Ascending aorta (tissue), 2 donors: ENCODE measurements at regions of chr11 and their contacts with region 1.

Region 1: DNA sequence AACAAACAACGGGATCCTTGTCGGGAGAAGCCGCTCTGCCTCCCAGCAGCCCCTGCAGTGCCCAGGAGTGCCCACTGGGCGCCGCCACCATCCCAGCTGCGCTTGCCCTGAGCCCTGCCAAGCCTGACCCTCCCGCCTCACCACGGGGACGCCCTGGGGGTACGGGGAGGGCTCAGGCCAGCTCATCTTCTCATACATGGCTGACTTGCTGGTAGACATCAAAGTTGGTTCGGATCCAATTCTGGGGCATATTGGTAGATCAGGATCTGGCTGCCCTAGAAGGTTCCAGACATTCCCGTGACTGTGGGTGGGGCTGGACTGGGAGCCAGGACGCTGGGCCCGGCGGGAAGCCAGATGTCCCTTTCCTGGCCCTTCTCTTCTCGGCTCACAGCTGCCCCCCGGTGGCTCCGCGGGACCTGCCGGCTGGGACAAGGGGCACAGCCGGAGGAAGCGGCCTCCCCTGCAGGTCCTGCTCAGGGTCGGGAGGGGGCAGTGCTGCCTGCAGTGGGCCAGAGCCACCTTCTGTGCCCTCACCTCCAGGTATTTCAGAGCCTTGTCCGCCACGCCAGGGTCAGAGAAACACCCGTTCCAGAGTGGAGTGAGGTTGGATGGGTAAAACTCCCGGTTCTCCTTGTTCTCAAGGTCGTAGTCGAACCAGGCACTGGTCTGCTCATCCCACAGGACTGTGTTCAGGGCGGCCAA is 10.6 kb upstream of the TREH start:
- DNase-seq: peak; percentile 76 to 90
- H3K4me3 ChIP-seq: peak overlapping the region; percentile 44 to 50
- H3K27ac ChIP-seq: peak overlapping the region; percentile 67 to 72
- H3K4me1 ChIP-seq: peaks cover 3 to 7% of the 10 kb centered on the region in 2 donors
- H3K27me3 ChIP-seq: no peaks in the 10 kb centered on the region
- CTCF ChIP-seq: peak; percentile 76 to 89 (median 86)

Region 2: GRCh38 chr11:118427707-118428106 is 262.3 kb before region 1 on chr11:
- intact Hi-C with region 1: no loop called
- DNase-seq: no peak
- H3K4me3 ChIP-seq: no peak overlapping the region
- H3K27ac ChIP-seq: no peak overlapping the region
- H3K4me1 ChIP-seq: no peaks in the 10 kb centered on the region
- H3K27me3 ChIP-seq: no peaks in the 10 kb centered on the region
- CTCF ChIP-seq: no peak

Region 3: DNA sequence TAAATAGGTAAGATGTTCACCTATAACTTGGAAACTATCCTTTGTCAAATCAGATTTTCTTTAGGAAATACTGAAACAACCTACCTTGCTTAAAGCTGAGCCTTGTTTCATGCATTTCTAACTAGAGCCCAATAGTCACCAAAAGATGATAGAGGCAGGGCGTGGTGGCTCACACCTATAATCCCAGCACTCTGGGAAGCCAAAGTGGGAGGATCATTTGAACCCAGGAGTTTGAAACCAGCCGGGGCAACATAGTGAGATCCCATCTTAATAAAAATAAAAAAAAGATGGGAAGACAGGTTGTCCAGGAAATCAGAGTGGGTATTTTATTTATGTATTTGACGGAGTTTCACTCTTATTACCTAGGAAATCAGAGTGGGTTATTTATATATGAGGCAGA is 62.7 kb after region 1 on chr11:
- intact Hi-C with region 1: loop called (anchors 5 kb)
- DNase-seq: no peak
- H3K4me3 ChIP-seq: no peak overlapping the region
- H3K27ac ChIP-seq: no peak overlapping the region
- H3K4me1 ChIP-seq: peaks cover 3 to 27% of the 10 kb centered on the region in 2 donors
- H3K27me3 ChIP-seq: no peaks in the 10 kb centered on the region
- CTCF ChIP-seq: no peak

Region 4: DNA sequence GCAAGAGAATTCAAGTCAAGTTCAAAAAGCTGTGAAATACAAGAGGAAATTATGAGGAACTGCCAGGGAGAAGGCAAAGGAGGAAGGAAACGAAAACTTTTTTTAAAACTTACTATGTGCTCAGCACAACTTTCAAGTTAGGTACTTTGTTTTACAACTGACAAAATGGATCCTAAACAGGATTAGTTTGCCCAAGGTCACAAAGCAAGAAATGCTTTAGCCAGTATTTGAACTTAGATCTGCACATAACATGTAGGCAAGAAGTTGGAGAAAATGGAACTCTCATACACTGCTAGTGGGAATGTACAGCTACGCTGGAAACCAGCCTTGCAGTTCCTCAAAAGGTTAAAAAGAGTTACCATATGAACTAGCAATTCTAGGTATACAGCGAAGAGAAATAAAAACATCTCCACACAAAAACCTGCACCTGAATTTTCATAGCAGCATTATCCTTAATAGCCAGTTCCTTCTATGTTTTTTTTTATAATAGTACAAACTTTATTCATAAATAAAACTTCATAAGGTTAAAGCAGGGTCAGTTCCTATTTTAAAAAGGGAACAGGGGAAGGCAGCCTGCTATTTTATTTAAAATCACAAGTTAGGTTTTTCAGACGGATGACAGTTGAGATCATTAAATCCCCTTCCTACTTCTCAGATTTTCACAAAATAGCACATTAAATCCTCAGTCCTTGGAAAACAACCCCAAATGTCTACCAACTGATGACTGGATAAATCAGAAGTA is 81.7 kb after region 1 on chr11:
- intact Hi-C with region 1: loop called (anchors 5 kb)
- DNase-seq: no peak
- H3K4me3 ChIP-seq: peak overlapping the region in 1 of 2 donors; percentile 5
- H3K27ac ChIP-seq: peak overlapping the region; percentile 15 to 19
- H3K4me1 ChIP-seq: peaks cover 7 to 68% of the 10 kb centered on the region in 2 donors
- H3K27me3 ChIP-seq: no peaks in the 10 kb centered on the region
- CTCF ChIP-seq: no peak

Region 5: GRCh38 chr11:118791111-118791965 is 101.3 kb after region 1 on chr11 and contains the start of gene DDX6:
- intact Hi-C with region 1: loop called (anchors 1 kb)
- DNase-seq: peak; percentile 59 to 96
- H3K4me3 ChIP-seq: peak within 1 kb of the TSS; percentile 73 to 92
- H3K27ac ChIP-seq: peak within 1 kb of the TSS; percentile 98 to 100
- H3K4me1 ChIP-seq: peaks cover under 1 to 12% of the 10 kb centered on the region in 2 donors
- H3K27me3 ChIP-seq: no peaks in the 10 kb centered on the region
- CTCF ChIP-seq: peak; percentile 41 to 56 (median 46)
- total RNA-seq, gene DDX6: 25.9 TPM

Region 6: DNA sequence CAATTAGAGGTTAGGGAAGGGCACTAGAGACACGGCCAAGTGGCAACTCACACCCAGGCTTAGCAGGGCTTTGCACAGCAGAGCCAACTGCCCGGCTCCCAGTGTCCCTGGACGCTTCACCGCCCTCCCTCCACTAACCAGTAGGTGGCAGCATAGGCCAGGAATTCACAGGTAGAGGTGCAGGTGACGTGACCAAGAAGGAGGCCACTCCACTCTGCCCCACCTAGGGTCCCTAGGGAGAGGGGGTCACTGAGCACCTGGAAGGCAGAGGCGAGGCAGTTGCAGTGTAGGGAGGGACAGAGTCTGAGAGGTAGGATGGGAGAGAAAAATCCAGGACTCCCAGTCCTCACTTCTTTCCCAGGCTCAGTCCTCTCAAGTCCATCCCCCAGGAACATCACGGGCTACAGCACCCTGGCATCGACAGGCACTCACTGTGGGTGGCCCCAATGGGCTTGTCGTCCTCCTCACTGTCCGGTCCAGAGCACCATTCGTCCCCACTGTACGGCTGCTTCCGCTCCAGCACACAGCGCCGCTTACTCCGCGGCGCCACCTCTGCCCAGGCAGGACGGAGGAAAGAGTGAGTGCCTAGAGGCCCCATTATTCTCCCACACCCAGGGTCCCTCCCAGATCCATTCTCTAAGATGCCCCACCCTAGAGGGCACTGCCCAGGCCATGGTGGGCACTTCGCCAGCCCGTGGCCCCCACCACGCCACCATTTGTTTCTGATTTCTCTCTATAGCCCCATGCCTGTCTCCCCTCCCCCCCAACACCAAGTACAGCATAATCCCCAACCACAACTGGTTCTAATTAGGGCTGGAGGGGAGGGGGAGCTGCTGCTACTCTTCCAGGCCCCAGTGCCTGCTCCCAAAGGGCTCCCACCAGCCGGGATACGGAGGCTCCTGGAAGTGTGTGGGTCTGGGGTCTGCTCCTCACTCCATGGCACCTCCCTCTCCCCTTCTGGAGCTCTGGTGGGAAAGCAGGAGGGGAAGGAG is 217.3 kb after region 1 on chr11:
- intact Hi-C with region 1: loop called (anchors 1 kb)
- DNase-seq: peak in 1 of 2 donors; percentile 93
- H3K4me3 ChIP-seq: peak overlapping the region in 1 of 2 donors; percentile 9
- H3K27ac ChIP-seq: peak overlapping the region; percentile 73 to 97
- H3K4me1 ChIP-seq: peaks cover 14 to 54% of the 10 kb centered on the region in 2 donors
- H3K27me3 ChIP-seq: no peaks in the 10 kb centered on the region
- CTCF ChIP-seq: peak; percentile 85 to 97 (median 95)

Region 7: DNA sequence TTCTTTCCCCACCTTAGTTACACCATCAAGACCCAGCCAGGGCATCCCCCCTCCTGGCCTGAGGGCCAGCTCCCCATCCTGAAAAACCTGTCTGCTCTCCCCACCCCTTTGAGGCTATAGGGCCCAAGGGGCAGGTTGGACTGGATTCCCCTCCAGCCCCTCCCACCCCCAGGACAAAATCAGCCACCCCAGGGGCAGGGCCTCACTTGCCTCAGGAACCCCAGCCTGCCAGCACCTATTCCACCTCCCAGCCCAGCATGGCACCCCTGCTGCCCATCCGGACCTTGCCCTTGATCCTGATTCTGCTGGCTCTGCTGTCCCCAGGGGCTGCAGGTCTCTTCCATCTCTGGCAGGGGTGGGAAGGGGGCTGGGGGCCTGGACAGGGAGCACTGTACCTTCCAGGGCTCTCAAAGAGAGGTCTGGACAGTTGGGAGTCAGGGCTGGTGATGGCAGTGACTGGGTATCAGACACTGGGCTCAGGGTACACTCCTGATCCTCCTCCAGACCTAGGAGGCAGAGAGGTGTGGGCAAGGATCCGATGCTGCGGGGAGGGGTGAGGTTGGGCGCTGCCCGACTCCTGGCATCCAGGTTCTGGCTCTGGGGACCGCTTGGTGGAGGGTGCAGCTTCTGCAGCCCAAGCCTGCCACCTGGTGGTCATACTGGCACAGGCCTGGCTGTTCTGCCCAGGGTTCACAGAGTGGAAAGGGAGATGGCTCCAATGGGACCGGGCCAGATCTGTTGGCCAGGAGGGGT is 266.3 kb after region 1 on chr11 and contains the start of gene UPK2:
- intact Hi-C with region 1: loop called (anchors 1 kb)
- DNase-seq: peak; percentile 49 to 93
- H3K4me3 ChIP-seq: no peak within 1 kb of the TSS
- H3K27ac ChIP-seq: no peak within 1 kb of the TSS
- H3K4me1 ChIP-seq: no peaks in the 10 kb centered on the region
- H3K27me3 ChIP-seq: no peaks in the 10 kb centered on the region
- CTCF ChIP-seq: peak; percentile 91 to 98 (median 91)
- total RNA-seq, gene UPK2: not detected

Region 8: DNA sequence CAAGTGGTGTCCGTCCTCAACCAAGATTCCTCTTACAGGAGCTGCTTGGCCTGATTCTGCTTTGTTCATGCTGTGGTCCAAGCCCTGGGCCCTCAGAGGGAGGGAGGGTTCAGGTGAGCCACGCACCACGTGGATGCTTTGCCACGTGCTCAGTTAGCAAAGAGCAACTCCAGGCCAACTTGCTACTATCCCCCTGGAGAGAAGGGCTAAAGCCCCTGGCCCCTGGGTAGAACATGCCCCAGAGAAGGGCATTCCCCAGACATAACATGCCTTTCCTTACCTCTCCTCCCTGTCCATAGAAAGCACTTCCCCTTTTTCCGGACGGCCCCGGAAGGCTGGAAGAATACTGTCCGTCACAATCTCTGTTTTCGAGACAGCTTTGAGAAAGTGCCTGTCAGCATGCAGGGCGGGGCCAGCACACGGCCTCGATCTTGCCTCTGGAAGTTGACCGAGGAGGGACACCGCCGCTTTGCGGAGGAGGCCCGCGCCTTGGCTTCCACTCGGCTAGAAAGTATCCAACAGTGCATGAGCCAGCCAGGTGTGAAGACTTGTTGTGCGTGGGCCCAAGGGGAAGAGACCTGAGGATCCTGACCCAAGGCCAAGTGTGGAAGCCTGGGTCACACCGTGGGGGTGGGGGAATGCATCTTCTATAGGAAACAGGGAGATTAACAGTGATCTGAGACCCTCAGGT is 290.3 kb after region 1 on chr11:
- intact Hi-C with region 1: no loop called
- DNase-seq: no peak
- H3K4me3 ChIP-seq: no peak overlapping the region
- H3K27ac ChIP-seq: no peak overlapping the region
- H3K4me1 ChIP-seq: no peaks in the 10 kb centered on the region
- H3K27me3 ChIP-seq: no peaks in the 10 kb centered on the region
- CTCF ChIP-seq: no peak